ENCODE measurements at regions of chr1 and their contacts with region 1.

Region 1: GRCh38 chr1:214566158-214567104 is 15.0 kb upstream of the PTPN14 start:
- DNase-seq: no peak
- H3K4me3 Mint-ChIP-seq: no peak overlapping the region
- H3K27ac Mint-ChIP-seq: peak overlapping the region; percentile 45
- H3K4me1 Mint-ChIP-seq: peaks cover 7% of the 10 kb centered on the region
- H3K27me3 Mint-ChIP-seq: peaks cover 9% of the 10 kb centered on the region

Region 2: GRCh38 chr1:214454619-214455396 is 111.6 kb before region 1 on chr1:
- intact Hi-C with region 1: loop called (anchors 5 kb)
- DNase-seq: no peak
- H3K4me3 Mint-ChIP-seq: no peak overlapping the region
- H3K27ac Mint-ChIP-seq: peak overlapping the region; percentile 45
- H3K4me1 Mint-ChIP-seq: peaks cover 54% of the 10 kb centered on the region
- H3K27me3 Mint-ChIP-seq: no peaks in the 10 kb centered on the region

Region 3: DNA sequence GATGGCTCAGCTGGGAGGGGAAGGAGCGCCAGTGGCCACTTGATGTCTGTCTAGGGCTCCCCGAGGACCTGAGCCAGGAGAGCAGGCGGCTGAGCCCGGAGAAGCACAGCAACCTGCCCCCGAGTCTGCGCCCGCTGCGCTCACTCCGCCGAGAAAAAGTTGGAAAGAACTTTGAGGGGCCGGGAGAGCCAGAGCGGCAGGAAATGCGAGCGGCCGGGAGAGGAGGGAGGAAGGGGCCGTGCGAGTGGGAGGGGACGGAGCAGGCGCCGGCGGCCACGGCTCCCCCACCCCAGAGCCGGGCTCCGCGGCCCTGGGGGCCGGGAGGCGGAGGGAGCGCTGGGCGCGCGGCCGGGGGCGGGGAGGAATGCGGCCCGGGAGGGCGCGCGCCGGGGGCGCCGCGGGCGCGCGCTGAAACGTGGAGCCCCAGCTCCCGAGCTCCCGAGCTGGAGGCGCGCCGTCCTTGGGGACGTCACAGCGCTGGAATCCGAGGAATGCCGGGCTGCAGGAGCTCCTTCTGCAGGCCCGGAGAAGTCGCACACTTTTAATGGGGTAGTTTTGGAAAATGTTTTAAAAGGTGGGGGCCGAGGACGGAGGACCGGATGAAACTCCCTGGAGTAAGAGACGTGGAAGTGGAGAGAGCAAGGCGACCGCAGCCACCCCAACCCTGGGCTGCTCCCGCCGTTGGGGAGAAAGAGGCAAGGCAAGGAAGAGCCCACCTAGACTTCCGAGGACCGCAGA is 14.8 kb before region 1 on chr1 and contains the start of gene PTPN14:
- intact Hi-C with region 1: loop called (anchors 2 kb)
- DNase-seq: peak; percentile 71
- H3K4me3 Mint-ChIP-seq: peak within 1 kb of the TSS; percentile 93
- H3K27ac Mint-ChIP-seq: peak within 1 kb of the TSS; percentile 87
- H3K4me1 Mint-ChIP-seq: peaks cover 19% of the 10 kb centered on the region
- H3K27me3 Mint-ChIP-seq: peaks cover 56% of the 10 kb centered on the region
- total RNA-seq, gene PTPN14: 29.7 and 29.9 TPM in 2 replicates